Lower leg skin (tissue), 4 donors: ENCODE measurements at regions of chr4 and their contacts with region 1.

Region 1: DNA sequence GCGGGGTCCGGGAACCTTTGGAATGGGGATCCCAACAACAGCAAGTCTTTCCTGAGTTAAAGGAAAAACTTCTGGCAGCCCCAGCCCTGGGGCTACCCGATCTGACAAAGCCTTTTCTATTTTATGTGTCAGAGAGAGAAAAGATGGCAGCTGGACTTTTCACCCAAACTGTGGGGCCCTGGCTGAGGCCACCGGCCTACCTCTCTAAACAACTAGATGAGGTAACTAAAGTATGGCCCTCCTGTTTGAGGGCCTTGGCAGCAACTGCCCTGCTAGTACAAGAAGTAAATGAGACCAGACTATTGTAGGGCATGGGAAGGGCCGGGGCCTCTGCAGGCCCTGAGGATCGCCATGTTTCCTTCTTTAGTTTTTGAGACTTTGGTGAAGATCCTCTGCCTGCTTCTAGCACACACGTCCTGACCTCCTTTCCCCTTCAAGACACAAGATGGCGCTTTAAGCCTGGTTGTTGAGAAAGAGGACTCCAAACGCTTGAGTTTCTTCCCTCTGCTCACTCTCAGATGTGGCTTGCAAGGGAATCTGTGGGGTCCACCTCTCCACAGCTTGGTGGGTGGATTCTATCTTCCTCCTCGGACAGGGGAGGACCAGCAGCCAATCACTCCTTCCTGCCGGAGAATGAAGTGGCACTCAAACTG is 18.5 kb upstream of the DRD5 start:
- DNase-seq: peak in 1 of 2 donors; percentile 60
- H3K4me3 ChIP-seq: no peak overlapping the region
- CTCF ChIP-seq: no peak
- POLR2A ChIP-seq: no peak

Region 2: DNA sequence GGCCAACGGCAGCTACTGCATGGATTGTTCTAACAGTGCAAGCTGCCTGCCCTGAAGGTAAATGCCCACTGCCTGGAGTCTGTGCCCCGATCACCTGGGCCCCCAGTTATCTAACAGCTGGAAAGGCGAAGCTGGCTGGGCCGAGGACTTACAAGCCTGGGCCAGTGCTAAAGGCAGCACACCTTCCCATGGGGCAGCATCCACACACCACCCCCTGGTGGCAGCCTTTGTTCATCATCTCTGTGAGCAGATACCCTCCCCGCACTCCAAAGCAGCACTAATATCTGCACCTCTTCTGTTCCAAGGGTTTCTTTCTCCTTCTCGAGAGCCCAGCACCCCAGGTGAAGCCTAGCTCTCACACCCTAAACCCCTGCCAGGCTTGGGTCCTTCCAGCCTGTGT is 250.8 kb after region 1 on chr4:
- intact Hi-C with region 1: loop called (anchors 5 kb)
- DNase-seq: no peak
- H3K4me3 ChIP-seq: no peak overlapping the region
- CTCF ChIP-seq: no peak
- POLR2A ChIP-seq: no peak